HepG2 (cell line): ENCODE measurements at regions of chr2 and their contacts with region 1.

Region 1: DNA sequence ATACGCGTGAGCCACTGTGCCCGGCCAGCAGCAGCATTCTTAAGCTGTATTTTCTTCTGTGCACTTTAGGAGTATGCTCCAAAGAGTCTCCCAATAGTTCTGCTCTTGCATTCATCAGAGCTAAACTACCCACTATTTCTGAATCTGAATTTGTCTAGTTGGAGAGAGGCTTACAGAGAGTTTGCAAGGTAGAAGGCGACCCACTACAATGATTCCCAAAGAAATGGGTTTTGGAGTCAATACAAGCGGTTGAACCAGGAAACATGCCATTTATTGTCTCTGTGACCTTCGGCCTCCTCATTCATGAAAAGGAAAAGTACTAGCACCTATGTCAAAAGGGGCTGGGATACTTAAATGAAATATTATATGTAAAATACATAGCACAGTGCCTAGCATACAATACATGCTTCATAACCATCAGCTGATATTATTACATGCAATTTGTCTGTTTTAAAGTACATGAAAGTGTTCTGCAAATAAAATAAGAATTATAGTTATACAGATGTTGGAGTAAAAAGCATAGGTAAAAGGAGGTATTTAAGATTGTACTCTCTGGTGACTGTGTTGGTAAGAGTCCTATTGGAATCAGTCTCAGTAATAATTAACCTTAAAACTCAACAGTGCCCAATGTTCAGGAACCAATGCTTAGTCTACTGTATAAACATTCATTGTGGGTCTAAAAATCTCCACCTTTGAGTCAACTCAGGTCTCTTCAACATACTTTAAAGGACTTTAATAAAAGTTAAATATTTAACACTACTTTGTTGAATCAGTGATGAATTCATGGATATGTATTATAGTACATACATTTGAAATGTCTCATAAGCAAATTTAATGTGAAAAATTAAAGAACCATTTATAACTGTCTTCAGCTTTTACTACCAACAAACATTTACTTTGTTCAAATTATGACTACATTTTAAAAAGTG is 89.8 kb upstream of the GRB14 start:
- DNase-seq: peak; percentile 98
- ATAC-seq: peak; percentile 96
- H3K4me3 ChIP-seq: peak overlapping the region; percentile 24 to 54 (median 53)
- H3K27ac ChIP-seq: peak overlapping the region; percentile 96
- H3K4me1 ChIP-seq: peaks cover 94% of the 10 kb centered on the region
- H3K27me3 ChIP-seq: no peaks in the 10 kb centered on the region
- CTCF ChIP-seq: no peak
- EP300 ChIP-seq: peak in 1 of 2 experiments; percentile 81; a peak in 2 of 4 replicates
- POLR2A ChIP-seq: peak; percentile 62 to 77
- RAD21 ChIP-seq: no peak; the same call in 1 of the 2 replicates

Region 2: GRCh38 chr2:164388511-164388910 is 322.6 kb before region 1 on chr2:
- CTCF ChIA-PET with region 1: no interaction called
- POLR2A ChIA-PET with region 1: no interaction called
- in situ Hi-C with region 1: no loop called
- intact Hi-C with region 1: no loop called
- DNase-seq: peak; percentile 51
- ATAC-seq: peak; percentile 79
- H3K4me3 ChIP-seq: no peak overlapping the region
- H3K27ac ChIP-seq: no peak overlapping the region
- H3K4me1 ChIP-seq: no peaks in the 10 kb centered on the region
- H3K27me3 ChIP-seq: no peaks in the 10 kb centered on the region
- CTCF ChIP-seq: no peak
- EP300 ChIP-seq: no peak
- POLR2A ChIP-seq: no peak
- RAD21 ChIP-seq: no peak

Region 3: GRCh38 chr2:164569378-164569777 is 141.7 kb before region 1 on chr2:
- CTCF ChIA-PET with region 1: no interaction called
- POLR2A ChIA-PET with region 1: no interaction called
- in situ Hi-C with region 1: loop called (anchors 5 kb)
- intact Hi-C with region 1: no loop called
- DNase-seq: no peak
- ATAC-seq: no peak
- H3K4me3 ChIP-seq: no peak overlapping the region
- H3K27ac ChIP-seq: no peak overlapping the region
- H3K4me1 ChIP-seq: peaks cover 50% of the 10 kb centered on the region
- H3K27me3 ChIP-seq: no peaks in the 10 kb centered on the region
- CTCF ChIP-seq: no peak
- EP300 ChIP-seq: no peak
- POLR2A ChIP-seq: no peak
- RAD21 ChIP-seq: no peak

Region 4: GRCh38 chr2:164620873-164621626 is 90.1 kb before region 1 on chr2 and contains the start of gene GRB14:
- CTCF ChIA-PET with region 1: no interaction called
- POLR2A ChIA-PET with region 1: interaction called, 3 read pairs
- in situ Hi-C with region 1: no loop called
- intact Hi-C with region 1: loop called (anchors 2 kb)
- DNase-seq: peak; percentile 32
- ATAC-seq: peak; percentile 90
- H3K4me3 ChIP-seq: peak within 1 kb of the TSS; percentile 70 to 94 (median 74)
- H3K27ac ChIP-seq: no peak within 1 kb of the TSS
- H3K4me1 ChIP-seq: peaks cover 39% of the 10 kb centered on the region
- H3K27me3 ChIP-seq: peaks cover 0 to 16% of the 10 kb centered on the region in 2 experiments; a peak in 1 of 5 replicates
- CTCF ChIP-seq: peak; percentile 36
- EP300 ChIP-seq: 0 out of 4 replicates have a peak, but pooled peaks of 1 of the 2 experiments have one; percentile 14
- POLR2A ChIP-seq: peak in 1 of 2 experiments; percentile 52; a peak in 1 of 4 replicates
- RAD21 ChIP-seq: no peak
- total RNA-seq, gene GRB14: 3.8 and 5.8 TPM in 2 replicates

Region 5: GRCh38 chr2:164692114-164692513 is 19.0 kb before region 1 on chr2:
- CTCF ChIA-PET with region 1: interaction called, 46 read pairs
- POLR2A ChIA-PET with region 1: interaction called, 8 read pairs
- in situ Hi-C with region 1: no loop called
- intact Hi-C with region 1: loop called (anchors 1 kb)
- DNase-seq: peak; percentile 43
- ATAC-seq: no peak
- H3K4me3 ChIP-seq: no peak overlapping the region
- H3K27ac ChIP-seq: peak overlapping the region; percentile 37
- H3K4me1 ChIP-seq: peaks cover 63% of the 10 kb centered on the region
- H3K27me3 ChIP-seq: no peaks in the 10 kb centered on the region
- CTCF ChIP-seq: no peak
- EP300 ChIP-seq: no peak
- POLR2A ChIP-seq: no peak
- RAD21 ChIP-seq: no peak

Region 6: DNA sequence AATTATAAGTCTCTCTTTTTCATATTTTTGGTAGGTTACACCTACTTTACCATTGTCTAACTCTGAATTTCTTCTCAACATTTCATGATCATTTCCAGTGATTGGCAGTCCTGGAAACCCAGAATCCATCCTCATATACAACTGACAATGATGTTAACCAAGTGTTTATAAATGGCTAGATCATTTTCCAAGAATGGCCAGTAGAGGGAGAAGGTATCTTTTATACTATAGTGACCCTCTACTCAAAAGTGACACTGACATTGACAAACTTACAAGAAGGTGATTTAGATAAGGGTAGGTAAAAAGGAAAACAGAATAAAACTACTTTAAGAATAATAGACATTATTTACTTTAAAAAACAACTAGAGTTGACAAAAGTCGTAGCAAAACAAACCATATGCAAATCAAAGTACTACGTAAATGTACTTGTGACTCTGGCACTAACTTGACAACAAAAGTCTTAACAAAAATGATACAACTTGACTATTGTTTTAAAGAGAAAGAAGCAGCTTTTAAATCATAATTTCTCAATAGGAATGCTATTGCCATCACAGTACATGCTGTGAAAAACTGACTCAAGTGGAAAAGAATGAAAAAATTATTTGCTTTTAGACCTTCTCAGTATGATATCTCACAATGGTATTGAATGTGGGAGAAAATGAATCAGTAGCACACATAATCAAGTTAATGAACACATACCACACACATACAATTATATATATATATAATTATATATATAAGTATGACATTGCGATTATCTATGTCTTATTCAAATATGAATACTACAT is 13.2 kb before region 1 on chr2:
- CTCF ChIA-PET with region 1: interaction called, 46 read pairs
- POLR2A ChIA-PET with region 1: interaction called, 8 read pairs
- in situ Hi-C with region 1: no loop called
- intact Hi-C with region 1: loop called (anchors 1 kb)
- DNase-seq: peak; percentile 61
- ATAC-seq: peak; percentile 65
- H3K4me3 ChIP-seq: no peak overlapping the region
- H3K27ac ChIP-seq: peak overlapping the region; percentile 11
- H3K4me1 ChIP-seq: peaks cover 65% of the 10 kb centered on the region
- H3K27me3 ChIP-seq: no peaks in the 10 kb centered on the region
- CTCF ChIP-seq: peak; percentile 72
- EP300 ChIP-seq: no peak; a peak in 1 of 4 replicates
- POLR2A ChIP-seq: no peak
- RAD21 ChIP-seq: peak; percentile 50; the same call in 1 of the 2 replicates

Region 7: DNA sequence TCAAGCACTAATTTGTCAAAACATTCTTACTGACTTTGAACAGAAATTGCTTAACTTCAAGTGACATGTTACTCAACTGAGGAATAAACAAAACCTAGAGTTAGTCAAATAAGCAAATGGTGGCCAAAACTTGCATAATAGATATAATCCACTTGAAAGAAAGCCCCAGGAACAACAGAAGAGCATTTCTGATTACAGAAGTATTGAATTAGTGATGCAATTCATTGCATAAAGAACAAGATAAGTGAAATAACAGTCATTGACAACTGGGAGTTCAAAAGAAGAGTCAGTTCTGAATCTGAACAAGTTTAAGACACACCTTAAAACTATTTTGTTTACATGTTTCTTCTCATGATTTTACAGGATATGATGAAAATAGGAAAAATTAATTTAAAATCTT is 99.7 kb after region 1 on chr2:
- CTCF ChIA-PET with region 1: no interaction called
- POLR2A ChIA-PET with region 1: no interaction called
- in situ Hi-C with region 1: no loop called
- intact Hi-C with region 1: no loop called
- DNase-seq: peak; percentile 96
- ATAC-seq: peak; percentile 82
- H3K4me3 ChIP-seq: no peak overlapping the region
- H3K27ac ChIP-seq: peak overlapping the region; percentile 53
- H3K4me1 ChIP-seq: peaks cover 72% of the 10 kb centered on the region
- H3K27me3 ChIP-seq: no peaks in the 10 kb centered on the region
- CTCF ChIP-seq: no peak
- EP300 ChIP-seq: peak in 1 of 2 experiments; percentile 100
- POLR2A ChIP-seq: no peak
- RAD21 ChIP-seq: no peak